MCF 10A (cell line): ENCODE measurements at regions of chr1 and their contacts with region 1.

Region 1: GRCh38 chr1:202135221-202135721 is 9.3 kb downstream of the ARL8A start:
- DNase-seq: peak; percentile 86
- H3K4me3 Mint-ChIP-seq: no peak overlapping the region
- H3K27ac Mint-ChIP-seq: no peak overlapping the region
- H3K4me1 Mint-ChIP-seq: peaks cover 8% of the 10 kb centered on the region
- H3K27me3 Mint-ChIP-seq: no peaks in the 10 kb centered on the region
- CTCF ChIP-seq: peak; percentile 98

Region 2: GRCh38 chr1:201982623-201983379 is 152.5 kb before region 1 on chr1 and contains the start of gene RNPEP:
- CTCF ChIA-PET with region 1: interaction called, 34 read pairs
- POLR2A ChIA-PET with region 1: interaction called, 3 read pairs
- intact Hi-C with region 1: no loop called
- DNase-seq: peak; percentile 94
- H3K4me3 Mint-ChIP-seq: peak within 1 kb of the TSS; percentile 90
- H3K27ac Mint-ChIP-seq: peak within 1 kb of the TSS; percentile 66
- H3K4me1 Mint-ChIP-seq: peaks cover 24% of the 10 kb centered on the region
- H3K27me3 Mint-ChIP-seq: no peaks in the 10 kb centered on the region
- CTCF ChIP-seq: peak; percentile 30
- total RNA-seq, gene RNPEP: 147 and 155 TPM in 2 replicates

Region 3: GRCh38 chr1:201999625-202000238 is 135.5 kb before region 1 on chr1:
- CTCF ChIA-PET with region 1: interaction called, 1,380 read pairs
- POLR2A ChIA-PET with region 1: interaction called, 10 read pairs
- intact Hi-C with region 1: no loop called
- DNase-seq: peak; percentile 81
- H3K4me3 Mint-ChIP-seq: no peak overlapping the region
- H3K27ac Mint-ChIP-seq: no peak overlapping the region
- H3K4me1 Mint-ChIP-seq: no peaks in the 10 kb centered on the region
- H3K27me3 Mint-ChIP-seq: no peaks in the 10 kb centered on the region
- CTCF ChIP-seq: peak; percentile 78

Region 4: GRCh38 chr1:202018468-202019255 is 116.6 kb before region 1 on chr1:
- CTCF ChIA-PET with region 1: interaction called, 1,380 read pairs
- POLR2A ChIA-PET with region 1: no interaction called
- intact Hi-C with region 1: no loop called
- DNase-seq: peak; percentile 94
- H3K4me3 Mint-ChIP-seq: peak overlapping the region; percentile 37
- H3K27ac Mint-ChIP-seq: peak overlapping the region; percentile 39
- H3K4me1 Mint-ChIP-seq: peaks cover 41% of the 10 kb centered on the region
- H3K27me3 Mint-ChIP-seq: peaks cover 13% of the 10 kb centered on the region
- CTCF ChIP-seq: no peak

Region 5: DNA sequence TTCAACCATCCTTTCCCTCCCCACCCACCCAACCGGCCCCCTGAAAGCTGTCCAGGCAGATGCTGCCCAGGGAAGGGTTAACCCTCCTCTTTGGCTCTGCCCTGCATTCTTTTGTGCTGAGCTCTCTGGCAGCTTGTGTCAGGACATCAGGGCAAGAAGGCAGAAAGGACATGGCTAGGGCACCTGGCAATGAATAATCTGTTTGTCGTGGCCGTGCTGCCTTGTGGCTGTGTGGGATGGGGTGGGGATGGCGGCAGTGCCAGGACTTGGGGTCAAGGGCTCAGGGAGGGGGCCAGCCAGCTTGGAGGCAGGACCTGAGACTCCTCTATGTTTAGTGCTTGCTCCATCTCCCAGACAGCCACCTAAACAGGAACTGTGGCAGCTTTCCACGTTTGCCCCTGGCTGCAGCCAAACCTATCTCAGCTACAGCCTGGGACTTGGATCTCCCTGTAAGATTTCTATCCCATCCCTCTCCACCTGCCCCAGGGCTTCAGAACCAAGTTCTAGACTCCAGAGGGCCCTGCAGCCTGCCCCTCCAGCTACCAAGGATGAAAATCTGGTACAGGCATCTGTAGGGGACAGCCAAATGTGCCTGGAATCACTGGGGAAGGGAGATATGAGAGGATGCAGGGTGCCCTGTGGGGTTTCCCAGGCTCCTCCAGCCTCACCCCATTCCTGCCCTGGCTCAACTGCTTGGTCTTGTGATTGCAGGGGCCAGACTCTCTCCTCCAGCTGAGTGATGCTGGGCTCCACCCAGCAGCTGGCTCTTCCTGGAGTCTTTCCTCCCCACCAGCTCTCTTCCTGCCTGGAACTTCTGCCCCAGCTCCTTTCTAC is 22.2 kb before region 1 on chr1:
- CTCF ChIA-PET with region 1: interaction called, 155 read pairs
- POLR2A ChIA-PET with region 1: interaction called, 5 read pairs
- intact Hi-C with region 1: no loop called
- DNase-seq: peak; percentile 27
- H3K4me3 Mint-ChIP-seq: no peak overlapping the region
- H3K27ac Mint-ChIP-seq: no peak overlapping the region
- H3K4me1 Mint-ChIP-seq: peaks cover 31% of the 10 kb centered on the region
- H3K27me3 Mint-ChIP-seq: no peaks in the 10 kb centered on the region
- CTCF ChIP-seq: no peak

Region 6: GRCh38 chr1:202154766-202155477 is 19.7 kb after region 1 on chr1:
- CTCF ChIA-PET with region 1: interaction called, 44 read pairs
- POLR2A ChIA-PET with region 1: no interaction called
- intact Hi-C with region 1: no loop called
- DNase-seq: peak; percentile 92
- H3K4me3 Mint-ChIP-seq: no peak overlapping the region
- H3K27ac Mint-ChIP-seq: no peak overlapping the region
- H3K4me1 Mint-ChIP-seq: peaks cover 12% of the 10 kb centered on the region
- H3K27me3 Mint-ChIP-seq: no peaks in the 10 kb centered on the region
- CTCF ChIP-seq: peak; percentile 58